GM18951 (cell line): ENCODE measurements at regions of chr9 and their contacts with region 1.

Region 1: GRCh38 chr9:89549031-89549644 is 51.2 kb upstream of the SEMA4D start:
- POLR2A ChIP-seq: no peak

Region 2: DNA sequence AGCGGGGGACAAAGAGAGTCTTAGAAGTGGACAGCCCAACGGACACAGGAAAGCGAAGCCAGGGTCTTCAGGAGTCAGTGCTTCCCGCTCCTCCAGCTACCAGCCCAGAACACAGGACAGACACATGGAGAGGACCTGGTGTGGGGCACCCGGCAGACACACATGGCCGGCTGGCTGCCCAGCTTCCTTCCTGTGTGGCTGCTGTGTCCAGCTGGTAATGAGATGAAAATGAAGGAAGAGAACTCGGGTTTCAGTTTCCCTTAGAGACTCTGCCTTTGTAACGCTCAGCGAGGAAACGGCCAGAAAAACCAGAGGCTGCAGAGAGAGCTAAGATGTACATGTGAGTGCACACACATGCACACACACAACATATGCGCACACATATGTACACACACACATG is 143.3 kb before region 1 on chr9:
- in situ Hi-C with region 1: loop called (anchors 10 kb)
- POLR2A ChIP-seq: peak; percentile 49

Region 3: DNA sequence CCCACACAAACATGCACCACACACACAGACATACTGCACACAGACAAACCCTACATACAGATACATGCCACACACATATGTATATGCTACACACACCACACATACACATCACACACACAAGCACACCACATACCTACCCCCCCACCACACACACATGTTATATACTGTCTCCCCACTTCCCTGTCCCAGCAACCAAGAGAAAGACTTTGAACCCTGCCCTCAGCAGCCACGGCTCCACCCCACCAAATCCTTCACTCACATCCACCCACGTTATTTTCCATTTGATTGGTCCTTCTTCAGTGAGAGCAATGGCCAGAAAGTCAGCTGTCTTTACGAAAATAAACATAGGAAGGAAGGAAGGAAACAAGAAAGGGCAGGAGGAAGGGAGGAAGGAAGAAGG is 613.7 kb after region 1 on chr9:
- in situ Hi-C with region 1: no loop called
- POLR2A ChIP-seq: no peak